PC-9 (cell line): ENCODE measurements at regions of chr1 and their contacts with region 1.

Region 1: GRCh38 chr1:64898107-64898845 is 68.1 kb downstream of the JAK1 start:
- DNase-seq: peak; percentile 86 to 99
- H3K4me3 ChIP-seq: no peak overlapping the region; the same call in 1 of the 2 replicates
- H3K27ac ChIP-seq: peak overlapping the region; percentile 95
- H3K4me1 ChIP-seq: peaks cover 46% of the 10 kb centered on the region
- H3K27me3 ChIP-seq: no peaks in the 10 kb centered on the region
- CTCF ChIP-seq: no peak

Region 2: GRCh38 chr1:64917328-64917861 is 19.1 kb after region 1 on chr1:
- CTCF ChIA-PET with region 1: interaction called, 3 read pairs
- POLR2A ChIA-PET with region 1: interaction called, 4 read pairs
- intact Hi-C with region 1: loop called (anchors 1 kb)
- DNase-seq: peak; percentile 74 to 86
- H3K4me3 ChIP-seq: peak overlapping the region; percentile 4; the same call in 1 of the 2 replicates
- H3K27ac ChIP-seq: peak overlapping the region; percentile 49
- H3K4me1 ChIP-seq: peaks cover 56% of the 10 kb centered on the region
- H3K27me3 ChIP-seq: no peaks in the 10 kb centered on the region
- CTCF ChIP-seq: no peak

Region 3: DNA sequence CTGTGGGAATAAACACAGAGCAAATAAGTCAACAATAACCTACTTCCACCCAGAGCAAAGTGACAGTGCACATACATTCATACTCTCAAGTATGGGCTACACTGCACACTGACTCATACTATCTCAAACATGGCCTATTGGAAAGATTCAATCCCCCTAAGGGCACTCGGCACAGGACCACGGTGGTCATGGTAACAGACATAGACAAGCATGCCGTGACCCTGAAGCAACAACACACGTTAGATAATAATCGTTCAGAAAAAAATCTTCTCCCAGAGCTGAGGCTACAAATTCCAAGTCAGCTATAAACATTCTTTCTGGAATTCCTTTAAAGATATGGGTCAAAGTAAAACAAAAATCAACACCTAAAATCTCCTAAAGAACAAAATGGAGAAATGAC is 84.9 kb after region 1 on chr1:
- CTCF ChIA-PET with region 1: no interaction called
- POLR2A ChIA-PET with region 1: interaction called, 3 read pairs
- intact Hi-C with region 1: loop called (anchors 5 kb)
- DNase-seq: peak; percentile 81 to 94
- H3K4me3 ChIP-seq: no peak overlapping the region
- H3K27ac ChIP-seq: peak overlapping the region; percentile 38; the same call in 1 of the 2 replicates
- H3K4me1 ChIP-seq: peaks cover 39% of the 10 kb centered on the region
- H3K27me3 ChIP-seq: no peaks in the 10 kb centered on the region
- CTCF ChIP-seq: no peak

Region 4: DNA sequence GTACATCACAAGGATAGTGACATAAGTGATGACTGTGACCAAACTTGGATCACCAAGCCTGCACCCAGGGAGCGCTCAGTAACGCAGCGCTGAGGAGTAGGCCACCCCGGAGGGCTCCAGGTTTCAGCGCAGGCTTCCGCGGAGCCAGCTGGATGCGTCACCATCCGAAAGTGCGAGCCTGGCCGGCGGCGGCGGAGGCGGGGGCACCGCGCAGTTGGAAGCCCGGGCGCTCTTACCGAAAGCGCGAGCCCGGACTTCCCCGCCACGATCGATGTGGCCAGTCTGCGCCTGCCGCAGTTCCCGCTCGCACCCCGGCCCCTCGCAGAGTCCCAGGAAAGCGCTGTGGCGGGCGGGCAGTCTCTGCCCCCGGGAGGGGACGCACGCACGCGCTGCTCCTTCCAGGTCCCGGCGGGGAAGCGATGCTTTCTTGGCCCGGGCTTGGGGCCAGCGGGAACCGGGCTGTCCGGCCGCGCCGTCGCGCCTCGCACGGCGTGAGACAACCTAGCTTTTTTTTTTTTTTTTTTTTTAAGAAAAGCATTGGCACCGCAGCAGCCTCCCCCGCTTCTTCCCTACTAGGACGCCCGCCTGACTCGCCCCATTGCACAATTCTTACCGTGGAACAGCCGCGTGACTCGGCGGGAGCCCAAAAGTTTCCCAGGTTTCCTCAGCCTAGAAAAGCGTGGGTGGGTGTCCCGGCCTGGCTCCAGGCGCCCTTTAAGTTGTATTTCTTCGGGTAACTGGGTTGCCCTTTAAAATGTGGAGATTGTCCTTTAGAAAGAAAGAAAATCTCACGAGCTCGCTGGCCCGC is 104.4 kb after region 1 on chr1:
- CTCF ChIA-PET with region 1: no interaction called
- POLR2A ChIA-PET with region 1: no interaction called
- intact Hi-C with region 1: loop called (anchors 1 kb)
- DNase-seq: peak; percentile 68 to 69
- H3K4me3 ChIP-seq: peak overlapping the region; percentile 83
- H3K27ac ChIP-seq: peak overlapping the region; percentile 71
- H3K4me1 ChIP-seq: peaks cover 4% of the 10 kb centered on the region; the same call in 1 of the 2 replicates
- H3K27me3 ChIP-seq: no peaks in the 10 kb centered on the region
- CTCF ChIP-seq: no peak

Region 5: GRCh38 chr1:65459397-65459768 is 561.1 kb after region 1 on chr1:
- CTCF ChIA-PET with region 1: no interaction called
- POLR2A ChIA-PET with region 1: no interaction called
- intact Hi-C with region 1: no loop called
- DNase-seq: peak in 1 of 2 experiments; percentile 18
- H3K4me3 ChIP-seq: no peak overlapping the region
- H3K27ac ChIP-seq: no peak overlapping the region
- H3K4me1 ChIP-seq: no peaks in the 10 kb centered on the region
- H3K27me3 ChIP-seq: no peaks in the 10 kb centered on the region
- CTCF ChIP-seq: peak; percentile 62